ENCODE measurements at regions of chr10 and their contacts with region 1.

Region 1: GRCh38 chr10:29746080-29746797 is 111.5 kb upstream of the SVIL start:
- DNase-seq: peak; percentile 90
- H3K4me3 ChIP-seq: no peak overlapping the region
- H3K27ac ChIP-seq: peak overlapping the region; percentile 68
- H3K4me1 ChIP-seq: peaks cover 16% of the 10 kb centered on the region
- H3K27me3 ChIP-seq: no peaks in the 10 kb centered on the region
- CTCF ChIP-seq: no peak
- POLR2A ChIP-seq: no peak

Region 2: GRCh38 chr10:29757551-29758297 is 11.5 kb after region 1 on chr10:
- CTCF ChIA-PET with region 1: interaction called, 10 read pairs
- POLR2A ChIA-PET with region 1: interaction called, 3 read pairs
- dilution Hi-C with region 1: no loop called
- intact Hi-C with region 1: no loop called
- DNase-seq: peak; percentile 83
- H3K4me3 ChIP-seq: peak overlapping the region in 1 of 3 experiments; percentile 26
- H3K27ac ChIP-seq: peak overlapping the region; percentile 66
- H3K4me1 ChIP-seq: peaks cover 26% of the 10 kb centered on the region
- H3K27me3 ChIP-seq: no peaks in the 10 kb centered on the region
- CTCF ChIP-seq: no peak
- POLR2A ChIP-seq: no peak

Region 3: GRCh38 chr10:30384701-30385201 is 638.5 kb after region 1 on chr10:
- CTCF ChIA-PET with region 1: no interaction called
- POLR2A ChIA-PET with region 1: interaction called, 12 read pairs
- dilution Hi-C with region 1: no loop called
- intact Hi-C with region 1: no loop called
- DNase-seq: no peak
- H3K4me3 ChIP-seq: no peak overlapping the region
- H3K27ac ChIP-seq: no peak overlapping the region
- H3K4me1 ChIP-seq: no peaks in the 10 kb centered on the region
- H3K27me3 ChIP-seq: peaks cover 0 to 10% of the 10 kb centered on the region in 2 experiments
- CTCF ChIP-seq: no peak
- POLR2A ChIP-seq: no peak

Region 4: DNA sequence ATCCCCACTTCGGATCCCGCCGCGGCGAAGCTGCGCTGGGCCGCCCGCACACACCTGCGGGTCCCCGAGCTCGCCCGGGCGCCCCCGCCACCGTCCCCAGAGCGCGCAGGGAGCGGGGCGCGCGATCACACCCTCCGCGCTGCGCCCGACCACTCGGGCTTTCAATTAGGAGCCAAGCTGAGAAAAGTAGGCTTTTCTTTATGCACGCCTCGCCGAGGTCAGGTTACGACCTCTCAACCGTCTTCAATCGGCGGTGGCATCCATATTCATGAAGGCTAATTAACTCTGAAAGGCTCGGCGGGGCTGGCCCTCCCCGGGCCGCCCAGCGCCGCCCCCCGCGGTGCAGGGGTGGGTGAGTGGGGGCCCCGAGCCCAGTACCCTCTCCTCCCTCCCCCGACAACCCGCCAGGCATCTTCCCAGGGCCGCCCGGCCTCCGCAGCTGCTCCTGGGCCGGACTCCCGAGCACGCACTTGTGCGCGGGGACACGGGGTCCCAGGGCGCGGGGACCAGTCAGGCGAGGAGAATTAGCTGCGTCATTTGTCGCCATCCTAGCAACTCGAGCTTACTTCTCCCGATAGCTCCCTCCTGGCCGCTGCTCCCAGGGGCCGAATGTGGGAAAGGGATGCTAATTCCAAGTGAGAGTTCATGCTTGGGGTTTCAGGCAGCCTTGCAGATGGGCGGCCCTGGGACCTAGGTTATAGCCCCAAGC is 1038.8 kb after region 1 on chr10:
- CTCF ChIA-PET with region 1: no interaction called
- POLR2A ChIA-PET with region 1: no interaction called
- dilution Hi-C with region 1: no loop called
- intact Hi-C with region 1: no loop called
- DNase-seq: peak; percentile 78
- H3K4me3 ChIP-seq: peak overlapping the region; percentile 18 to 28 (median 28)
- H3K27ac ChIP-seq: peak overlapping the region; percentile 92
- H3K4me1 ChIP-seq: peaks cover 41% of the 10 kb centered on the region
- H3K27me3 ChIP-seq: no peaks in the 10 kb centered on the region
- CTCF ChIP-seq: no peak
- POLR2A ChIP-seq: no peak